ENCODE measurements at regions of chr21 and their contacts with region 1.

Region 1: GRCh38 chr21:43810505-43811261 is 21.3 kb downstream of the RRP1 start:
- DNase-seq: peak; percentile 90 to 95
- ATAC-seq: peak; percentile 83 to 89 (median 86)
- H3K4me3 ChIP-seq: peak overlapping the region; percentile 39
- H3K27ac ChIP-seq: no peak overlapping the region
- H3K4me1 ChIP-seq: peaks cover 19% of the 10 kb centered on the region
- H3K27me3 ChIP-seq: no peaks in the 10 kb centered on the region
- CTCF ChIP-seq: peak; percentile 96

Region 2: DNA sequence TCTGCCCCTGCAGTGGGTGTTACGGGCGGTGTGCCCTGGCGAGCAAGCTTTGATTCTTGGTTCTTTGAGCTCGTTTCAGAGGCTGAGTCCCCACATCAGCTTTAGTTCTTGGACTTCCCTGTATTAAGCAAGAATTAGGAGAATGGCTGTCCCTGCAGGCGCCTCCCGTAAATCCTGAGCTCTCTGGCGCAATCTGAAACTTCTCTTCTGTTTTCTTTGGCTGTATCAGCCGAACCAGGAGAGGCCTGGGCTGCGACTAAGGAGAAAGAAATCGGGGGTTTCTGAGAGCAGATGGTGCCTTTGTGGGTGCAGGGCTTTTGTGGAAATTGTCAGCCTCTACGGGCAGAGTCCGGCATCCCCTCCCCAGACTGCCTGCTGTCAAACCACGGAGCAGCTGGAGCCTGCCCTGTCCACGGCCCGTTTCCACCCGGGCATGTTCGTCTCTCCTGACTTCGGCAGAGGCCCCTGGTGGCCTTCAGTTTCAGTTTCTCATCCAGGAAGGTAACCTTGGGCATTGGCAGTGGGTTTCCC is 52.5 kb before region 1 on chr21:
- intact Hi-C with region 1: loop called in 1 of 2 experiments (anchors 10 kb)
- DNase-seq: peak; percentile 55 to 59
- ATAC-seq: peak in 3 of 4 donors; percentile 22 to 65 (median 51)
- H3K4me3 ChIP-seq: peak overlapping the region; percentile 20
- H3K27ac ChIP-seq: no peak overlapping the region
- H3K4me1 ChIP-seq: no peaks in the 10 kb centered on the region
- H3K27me3 ChIP-seq: no peaks in the 10 kb centered on the region
- CTCF ChIP-seq: no peak

Region 3: DNA sequence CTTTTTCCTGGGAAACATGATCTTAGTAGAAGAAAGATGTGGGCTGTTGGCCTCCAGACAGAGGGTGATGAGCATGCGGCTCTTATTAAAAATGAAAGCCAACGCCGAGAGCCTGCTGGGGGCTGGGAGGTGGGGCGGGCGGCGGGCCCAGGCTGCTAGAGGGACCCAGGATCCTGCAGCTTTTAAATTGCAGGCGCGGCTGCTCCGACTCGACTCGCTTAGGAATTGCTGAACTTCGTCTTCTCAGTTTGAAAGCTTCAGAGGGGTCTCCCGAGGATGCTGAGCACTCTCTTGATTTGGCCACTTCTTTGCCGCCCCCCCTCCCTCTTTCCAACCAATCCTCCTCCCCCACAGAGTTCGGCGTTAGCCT is 55.6 kb after region 1 on chr21:
- intact Hi-C with region 1: loop called (anchors 2 to 10 kb)
- DNase-seq: peak; percentile 56 to 72
- ATAC-seq: peak; percentile 49 to 75 (median 66)
- H3K4me3 ChIP-seq: peak overlapping the region; percentile 90
- H3K27ac ChIP-seq: peak overlapping the region; percentile 90
- H3K4me1 ChIP-seq: peaks cover 43% of the 10 kb centered on the region
- H3K27me3 ChIP-seq: no peaks in the 10 kb centered on the region
- CTCF ChIP-seq: no peak

Region 4: GRCh38 chr21:43921979-43922945 is 111.6 kb after region 1 on chr21:
- intact Hi-C with region 1: loop called in 1 of 2 experiments (anchors 5 kb)
- DNase-seq: peak in 1 of 2 donors; percentile 56
- ATAC-seq: no peak
- H3K4me3 ChIP-seq: no peak overlapping the region
- H3K27ac ChIP-seq: peak overlapping the region; percentile 67
- H3K4me1 ChIP-seq: peaks cover 78% of the 10 kb centered on the region
- H3K27me3 ChIP-seq: no peaks in the 10 kb centered on the region
- CTCF ChIP-seq: no peak

Region 5: GRCh38 chr21:43938751-43939442 is 128.2 kb after region 1 on chr21:
- intact Hi-C with region 1: loop called (anchors 2 to 5 kb)
- DNase-seq: peak; percentile 84 to 86
- ATAC-seq: peak; percentile 70 to 86 (median 82)
- H3K4me3 ChIP-seq: peak overlapping the region; percentile 58
- H3K27ac ChIP-seq: peak overlapping the region; percentile 71
- H3K4me1 ChIP-seq: peaks cover 39% of the 10 kb centered on the region
- H3K27me3 ChIP-seq: no peaks in the 10 kb centered on the region
- CTCF ChIP-seq: peak; percentile 80

Region 6: GRCh38 chr21:43975495-43975993 is 164.9 kb after region 1 on chr21:
- intact Hi-C with region 1: loop called in 1 of 2 experiments (anchors 1 kb)
- DNase-seq: peak; percentile 80 to 89
- ATAC-seq: peak; percentile 74 to 81 (median 76)
- H3K4me3 ChIP-seq: no peak overlapping the region
- H3K27ac ChIP-seq: no peak overlapping the region
- H3K4me1 ChIP-seq: peaks cover 7% of the 10 kb centered on the region
- H3K27me3 ChIP-seq: no peaks in the 10 kb centered on the region
- CTCF ChIP-seq: peak; percentile 95